ENCODE measurements at regions of chr15 and their contacts with region 1.

Region 1: DNA sequence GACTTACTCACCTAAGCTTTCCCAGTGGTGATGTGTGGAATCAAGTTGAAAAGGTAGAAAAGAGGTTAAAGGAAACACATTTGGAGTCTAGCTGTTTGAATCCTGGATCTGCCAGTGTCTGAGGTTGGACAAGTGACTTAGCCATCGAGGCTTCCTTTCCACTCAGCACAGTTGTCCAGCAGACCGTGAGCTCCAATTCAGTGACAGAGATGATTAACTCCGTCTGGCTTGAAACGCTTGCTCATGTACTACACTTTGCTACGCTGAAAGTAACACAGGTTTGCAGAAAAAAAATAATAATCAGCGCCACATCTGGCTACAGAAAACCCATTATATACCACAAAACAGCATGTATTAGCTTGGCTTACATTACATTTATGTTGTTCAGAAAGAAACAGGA is 364.9 kb upstream of the MCTP2 start:
- DNase-seq: no peak
- ATAC-seq: no peak
- H3K4me3 Mint-ChIP-seq: no peak overlapping the region
- H3K27ac Mint-ChIP-seq: no peak overlapping the region
- H3K4me1 Mint-ChIP-seq: peaks cover 6% of the 10 kb centered on the region
- H3K27me3 Mint-ChIP-seq: peaks cover 8% of the 10 kb centered on the region

Region 2: GRCh38 chr15:93706495-93707292 is 159.8 kb before region 1 on chr15:
- CTCF ChIA-PET with region 1: no interaction called
- POLR2A ChIA-PET with region 1: no interaction called
- intact Hi-C with region 1: no loop called
- DNase-seq: no peak
- ATAC-seq: no peak
- H3K4me3 Mint-ChIP-seq: no peak overlapping the region
- H3K27ac Mint-ChIP-seq: no peak overlapping the region
- H3K4me1 Mint-ChIP-seq: no peaks in the 10 kb centered on the region
- H3K27me3 Mint-ChIP-seq: no peaks in the 10 kb centered on the region

Region 3: GRCh38 chr15:93895976-93896651 is 29.6 kb after region 1 on chr15:
- CTCF ChIA-PET with region 1: no interaction called
- POLR2A ChIA-PET with region 1: no interaction called
- intact Hi-C with region 1: no loop called
- DNase-seq: no peak
- ATAC-seq: no peak
- H3K4me3 Mint-ChIP-seq: no peak overlapping the region
- H3K27ac Mint-ChIP-seq: no peak overlapping the region
- H3K4me1 Mint-ChIP-seq: no peaks in the 10 kb centered on the region
- H3K27me3 Mint-ChIP-seq: peaks cover 3% of the 10 kb centered on the region

Region 4: GRCh38 chr15:94547711-94548110 is 681.2 kb after region 1 on chr15:
- CTCF ChIA-PET with region 1: no interaction called
- POLR2A ChIA-PET with region 1: interaction called, 13 read pairs
- intact Hi-C with region 1: no loop called
- DNase-seq: no peak
- ATAC-seq: no peak
- H3K4me3 Mint-ChIP-seq: no peak overlapping the region
- H3K27ac Mint-ChIP-seq: no peak overlapping the region
- H3K4me1 Mint-ChIP-seq: no peaks in the 10 kb centered on the region
- H3K27me3 Mint-ChIP-seq: peaks cover 16% of the 10 kb centered on the region

Measured in activated CD4-positive, alpha-beta T cell treated with anti-CD3 and anti-CD28 coated beads for 36 hours (primary cell).